ENCODE measurements at regions of chrX and their contacts with region 1.

Region 1: GRCh38 chrX:56248492-56248891 is 16.3 kb downstream of the KLF8 start:
- DNase-seq: no peak
- ATAC-seq: no peak
- H3K4me3 ChIP-seq: no peak overlapping the region
- H3K27ac ChIP-seq: no peak overlapping the region
- H3K4me1 ChIP-seq: no peaks in the 10 kb centered on the region
- H3K27me3 ChIP-seq: no peaks in the 10 kb centered on the region
- CTCF ChIP-seq: peak; percentile 32 to 59 (median 50)
- POLR2A ChIP-seq: no peak

Region 2: DNA sequence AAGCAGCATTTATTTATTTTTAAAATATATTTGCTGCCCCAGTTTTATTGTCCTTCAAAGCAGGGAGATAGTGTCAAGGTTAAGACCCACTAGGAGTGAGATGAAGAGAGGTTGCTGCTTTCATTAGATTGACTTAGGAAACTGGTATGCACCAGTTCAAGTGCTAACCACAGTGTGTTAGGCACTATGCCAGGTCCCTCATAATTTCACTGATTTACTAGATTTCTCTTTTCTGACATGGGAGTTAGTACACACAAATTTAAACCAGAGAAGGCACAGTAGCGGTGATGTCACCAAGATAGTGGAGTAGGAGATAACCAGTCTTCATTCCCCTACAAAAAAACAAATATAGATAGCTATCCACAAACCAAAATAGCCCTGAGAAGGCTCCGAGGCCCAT is 516.7 kb before region 1 on chrX:
- in situ Hi-C with region 1: loop called in 1 of 4 experiments (anchors 25 kb)
- intact Hi-C with region 1: no loop called
- DNase-seq: no peak
- ATAC-seq: no peak
- H3K4me3 ChIP-seq: no peak overlapping the region
- H3K27ac ChIP-seq: no peak overlapping the region
- H3K4me1 ChIP-seq: no peaks in the 10 kb centered on the region
- H3K27me3 ChIP-seq: no peaks in the 10 kb centered on the region
- CTCF ChIP-seq: no peak
- POLR2A ChIP-seq: no peak

Region 3: GRCh38 chrX:56219700-56220099 is 28.8 kb before region 1 on chrX:
- in situ Hi-C with region 1: no loop called
- intact Hi-C with region 1: loop called (anchors 2 kb)
- DNase-seq: no peak
- ATAC-seq: no peak
- H3K4me3 ChIP-seq: no peak overlapping the region
- H3K27ac ChIP-seq: no peak overlapping the region
- H3K4me1 ChIP-seq: no peaks in the 10 kb centered on the region
- H3K27me3 ChIP-seq: peaks cover 0 to 3% (median 0%) of the 10 kb centered on the region in 3 donors
- CTCF ChIP-seq: peak in 4 of 5 experiments; percentile 13 to 40 (median 16)
- POLR2A ChIP-seq: no peak

Region 4: GRCh38 chrX:56319165-56319564 is 70.7 kb after region 1 on chrX:
- in situ Hi-C with region 1: no loop called
- intact Hi-C with region 1: no loop called
- DNase-seq: no peak
- ATAC-seq: no peak
- H3K4me3 ChIP-seq: no peak overlapping the region
- H3K27ac ChIP-seq: no peak overlapping the region
- H3K4me1 ChIP-seq: no peaks in the 10 kb centered on the region
- H3K27me3 ChIP-seq: no peaks in the 10 kb centered on the region
- CTCF ChIP-seq: no peak
- POLR2A ChIP-seq: no peak

Region 5: GRCh38 chrX:56382278-56382677 is 133.8 kb after region 1 on chrX:
- in situ Hi-C with region 1: no loop called
- intact Hi-C with region 1: no loop called
- DNase-seq: no peak
- ATAC-seq: no peak
- H3K4me3 ChIP-seq: no peak overlapping the region
- H3K27ac ChIP-seq: no peak overlapping the region
- H3K4me1 ChIP-seq: no peaks in the 10 kb centered on the region
- H3K27me3 ChIP-seq: no peaks in the 10 kb centered on the region
- CTCF ChIP-seq: no peak
- POLR2A ChIP-seq: no peak